ENCODE measurements at regions of chr2 and their contacts with region 1.

Region 1: GRCh38 chr2:72887754-72888437 is 688 bp downstream of the SPR start:
- DNase-seq: peak; percentile 63
- H3K4me3 Mint-ChIP-seq: peak overlapping the region; percentile 66
- H3K27ac Mint-ChIP-seq: no peak overlapping the region
- H3K4me1 Mint-ChIP-seq: peaks cover 8% of the 10 kb centered on the region
- H3K27me3 Mint-ChIP-seq: peaks cover 81% of the 10 kb centered on the region

Region 2: DNA sequence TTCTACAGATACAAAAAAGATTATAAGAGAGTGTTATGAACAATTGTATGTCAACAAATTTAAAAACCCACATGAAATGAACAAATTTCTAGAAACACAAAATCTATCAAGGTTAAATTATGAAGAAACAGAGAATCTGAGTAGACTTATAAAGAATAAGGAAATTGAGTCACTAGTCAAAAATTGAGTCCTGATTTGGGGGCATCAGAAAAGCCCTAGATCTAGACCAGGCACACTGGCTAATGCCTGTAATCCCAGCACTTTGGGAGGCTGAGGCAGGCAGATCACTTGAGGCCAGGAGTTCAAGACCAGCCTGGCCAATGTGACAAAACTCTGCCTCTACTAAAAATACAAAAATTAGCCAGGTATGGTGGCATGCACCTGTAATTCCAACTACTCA is 16.0 kb before region 1 on chr2:
- CTCF ChIA-PET with region 1: interaction called, 13 read pairs
- DNase-seq: no peak
- H3K4me3 Mint-ChIP-seq: no peak overlapping the region
- H3K27ac Mint-ChIP-seq: no peak overlapping the region
- H3K4me1 Mint-ChIP-seq: no peaks in the 10 kb centered on the region
- H3K27me3 Mint-ChIP-seq: peaks cover 41% of the 10 kb centered on the region

Region 3: DNA sequence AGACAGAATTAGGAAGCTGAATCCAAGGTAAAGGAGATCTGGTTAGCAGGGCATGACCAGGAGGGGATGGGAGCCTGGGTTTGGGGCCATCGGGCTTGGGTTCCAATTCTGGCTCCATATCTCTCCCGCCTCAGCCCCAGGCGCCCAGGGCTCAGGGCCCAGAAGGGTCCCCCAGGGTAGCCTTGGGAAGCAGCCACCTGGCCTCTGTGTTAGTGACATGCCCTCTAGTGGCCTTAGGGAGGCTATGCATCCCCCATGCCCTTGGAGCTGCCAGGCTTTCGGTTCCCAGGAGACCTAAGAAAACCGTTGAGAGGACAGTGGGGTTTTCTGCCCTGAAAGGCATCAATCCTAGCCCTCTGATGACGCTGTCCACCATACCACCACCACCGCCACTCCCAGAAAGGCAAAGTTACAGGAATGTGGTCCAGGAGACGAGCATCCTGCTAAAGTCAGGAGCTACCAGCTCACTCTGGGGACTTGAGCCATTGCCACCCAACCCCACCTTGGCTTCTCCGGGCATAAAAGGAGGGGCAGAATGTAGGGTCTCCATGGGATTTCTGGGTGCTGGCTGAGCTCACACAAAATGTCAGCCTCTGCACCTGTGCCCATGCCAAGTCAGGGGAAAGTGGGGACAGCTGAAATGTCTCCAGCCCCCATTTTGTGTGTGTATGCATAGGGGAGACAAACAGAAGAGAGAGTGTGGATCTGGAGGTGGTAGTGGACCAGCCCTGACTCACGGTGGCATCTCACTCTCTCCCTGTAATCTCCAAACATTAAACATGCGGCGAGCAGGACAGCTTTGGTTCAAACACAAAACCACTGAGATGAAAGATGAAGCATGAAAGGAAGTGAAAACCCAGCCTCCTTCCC is 85.9 kb after region 1 on chr2:
- CTCF ChIA-PET with region 1: interaction called, 155 read pairs
- DNase-seq: peak; percentile 62
- H3K4me3 Mint-ChIP-seq: no peak overlapping the region
- H3K27ac Mint-ChIP-seq: no peak overlapping the region
- H3K4me1 Mint-ChIP-seq: no peaks in the 10 kb centered on the region
- H3K27me3 Mint-ChIP-seq: peaks cover 13% of the 10 kb centered on the region

Region 4: DNA sequence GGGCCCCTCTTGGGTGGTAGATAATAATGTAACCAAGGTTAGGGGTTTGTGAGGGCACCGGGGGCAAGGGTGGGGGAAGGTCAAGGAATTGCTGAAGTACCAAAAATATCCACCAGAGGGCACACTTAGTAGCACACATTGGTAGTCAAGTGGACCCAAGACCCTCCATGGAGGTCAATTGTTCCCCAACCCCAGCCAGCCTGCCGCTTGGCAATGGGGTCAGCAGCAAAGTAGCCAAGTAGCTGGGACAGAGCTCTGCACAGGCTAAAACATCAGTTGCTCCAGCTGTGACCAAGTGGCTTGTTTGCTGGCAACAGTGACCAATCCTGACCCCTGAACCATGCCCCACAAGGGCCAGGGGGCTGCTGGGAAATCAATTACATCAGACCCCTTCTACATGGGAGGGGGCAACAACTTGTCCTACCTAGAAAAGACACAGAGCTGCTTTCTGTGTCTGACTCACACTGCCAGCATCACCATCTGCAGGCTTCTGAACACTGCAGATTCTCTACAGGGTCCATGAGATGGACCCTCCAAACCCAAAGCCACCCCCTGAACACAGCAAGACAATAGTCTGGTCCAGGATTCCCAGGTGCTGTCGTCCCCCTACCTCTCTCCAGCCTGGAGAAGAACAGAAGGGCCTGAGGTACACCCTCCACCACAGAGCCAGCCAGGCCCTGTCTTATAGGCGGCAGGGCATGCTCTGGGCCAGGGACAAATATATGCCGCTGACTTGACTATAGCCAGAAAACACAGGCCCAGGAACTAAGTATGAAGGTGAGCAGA is 105.4 kb after region 1 on chr2:
- CTCF ChIA-PET with region 1: interaction called, 14 read pairs
- DNase-seq: peak; percentile 57
- H3K4me3 Mint-ChIP-seq: no peak overlapping the region
- H3K27ac Mint-ChIP-seq: no peak overlapping the region
- H3K4me1 Mint-ChIP-seq: no peaks in the 10 kb centered on the region
- H3K27me3 Mint-ChIP-seq: no peaks in the 10 kb centered on the region

Region 5: GRCh38 chr2:73176881-73177644 is 289.2 kb after region 1 on chr2:
- CTCF ChIA-PET with region 1: interaction called, 51 read pairs
- DNase-seq: peak; percentile 91
- H3K4me3 Mint-ChIP-seq: peak overlapping the region; percentile 80
- H3K27ac Mint-ChIP-seq: no peak overlapping the region
- H3K4me1 Mint-ChIP-seq: peaks cover 16% of the 10 kb centered on the region
- H3K27me3 Mint-ChIP-seq: peaks cover 80% of the 10 kb centered on the region

Measured in activated naive CD4-positive, alpha-beta T cell treated with anti-CD3 and anti-CD28 coated beads, Interleukin-2, amount 10 ng/mL, durations not matched to agents 7 days and 5 days (primary cell).